Prostate gland (tissue), 2 donors: ENCODE measurements at regions of chr19 and their contacts with region 1.

Region 1: GRCh38 chr19:14147797-14148605 is 11.6 kb upstream of the ASF1B start:
- DNase-seq: peak; percentile 48
- H3K4me3 ChIP-seq: no peak overlapping the region
- H3K27ac ChIP-seq: peak overlapping the region; percentile 63 to 68
- H3K4me1 ChIP-seq: peaks cover 10% of the 10 kb centered on the region
- H3K27me3 ChIP-seq: no peaks in the 10 kb centered on the region
- CTCF ChIP-seq: peak; percentile 53 to 89 (median 72)
- POLR2A ChIP-seq: no peak

Region 2: GRCh38 chr19:14198384-14199376 is 50.7 kb after region 1 on chr19:
- intact Hi-C with region 1: loop called (anchors 5 kb)
- DNase-seq: no peak
- H3K4me3 ChIP-seq: no peak overlapping the region
- H3K27ac ChIP-seq: no peak overlapping the region
- H3K4me1 ChIP-seq: no peaks in the 10 kb centered on the region
- H3K27me3 ChIP-seq: no peaks in the 10 kb centered on the region
- CTCF ChIP-seq: no peak
- POLR2A ChIP-seq: no peak

Region 3: DNA sequence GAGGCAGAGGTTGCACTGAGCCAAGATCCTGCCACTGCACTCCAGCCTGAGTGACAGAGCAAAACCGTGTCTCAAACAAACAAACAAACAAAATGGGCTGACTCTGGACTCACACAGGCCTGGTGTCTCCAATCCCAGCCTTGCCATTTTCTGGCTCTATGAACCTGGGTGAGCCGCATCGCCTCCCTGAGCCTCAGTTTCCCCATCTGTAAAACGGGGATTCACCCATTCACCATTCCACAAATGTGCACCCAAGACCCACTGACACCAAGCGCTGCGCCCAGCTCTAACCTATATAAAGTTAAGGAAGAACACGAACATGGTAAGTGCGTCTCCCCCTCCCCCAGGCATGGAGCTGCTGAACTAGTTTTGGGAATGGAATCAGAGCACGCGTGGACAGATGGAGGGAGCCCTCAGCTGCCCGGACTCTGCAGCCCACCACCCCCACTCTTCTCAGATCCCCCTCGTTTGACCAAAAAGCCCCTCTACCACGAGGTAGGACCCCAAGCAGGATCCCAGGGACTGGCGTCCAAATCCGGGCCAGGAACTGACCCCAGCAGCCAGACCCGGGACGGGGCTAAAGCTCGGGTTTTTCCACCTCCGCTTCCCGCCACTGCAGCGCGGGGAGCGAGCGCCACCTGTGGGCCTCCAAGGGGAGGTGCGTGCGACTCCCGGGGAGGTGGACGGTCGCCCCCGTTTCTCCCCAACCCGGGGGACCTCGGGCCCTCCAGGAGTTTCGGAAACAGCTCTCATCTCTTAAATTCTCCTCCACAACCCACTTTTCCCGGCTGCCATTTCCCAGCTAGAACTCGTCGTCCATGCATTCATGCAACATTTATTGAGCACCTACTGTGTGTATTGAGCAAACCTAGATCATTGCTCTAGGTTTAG is 200.2 kb after region 1 on chr19:
- intact Hi-C with region 1: loop called (anchors 1 kb)
- DNase-seq: peak; percentile 34
- H3K4me3 ChIP-seq: peak overlapping the region; percentile 4 to 6
- H3K27ac ChIP-seq: no peak overlapping the region
- H3K4me1 ChIP-seq: no peaks in the 10 kb centered on the region
- H3K27me3 ChIP-seq: peaks cover 3% of the 10 kb centered on the region
- CTCF ChIP-seq: peak; percentile 74 to 95 (median 84)
- POLR2A ChIP-seq: no peak

Region 4: GRCh38 chr19:14472202-14472938 is 324.4 kb after region 1 on chr19:
- intact Hi-C with region 1: loop called (anchors 10 kb)
- DNase-seq: no peak
- H3K4me3 ChIP-seq: no peak overlapping the region
- H3K27ac ChIP-seq: no peak overlapping the region
- H3K4me1 ChIP-seq: peaks cover 10% of the 10 kb centered on the region
- H3K27me3 ChIP-seq: no peaks in the 10 kb centered on the region
- CTCF ChIP-seq: peak; percentile 85 to 95 (median 90)
- POLR2A ChIP-seq: no peak